ENCODE measurements at regions of chr7 and their contacts with region 1.

Region 1: DNA sequence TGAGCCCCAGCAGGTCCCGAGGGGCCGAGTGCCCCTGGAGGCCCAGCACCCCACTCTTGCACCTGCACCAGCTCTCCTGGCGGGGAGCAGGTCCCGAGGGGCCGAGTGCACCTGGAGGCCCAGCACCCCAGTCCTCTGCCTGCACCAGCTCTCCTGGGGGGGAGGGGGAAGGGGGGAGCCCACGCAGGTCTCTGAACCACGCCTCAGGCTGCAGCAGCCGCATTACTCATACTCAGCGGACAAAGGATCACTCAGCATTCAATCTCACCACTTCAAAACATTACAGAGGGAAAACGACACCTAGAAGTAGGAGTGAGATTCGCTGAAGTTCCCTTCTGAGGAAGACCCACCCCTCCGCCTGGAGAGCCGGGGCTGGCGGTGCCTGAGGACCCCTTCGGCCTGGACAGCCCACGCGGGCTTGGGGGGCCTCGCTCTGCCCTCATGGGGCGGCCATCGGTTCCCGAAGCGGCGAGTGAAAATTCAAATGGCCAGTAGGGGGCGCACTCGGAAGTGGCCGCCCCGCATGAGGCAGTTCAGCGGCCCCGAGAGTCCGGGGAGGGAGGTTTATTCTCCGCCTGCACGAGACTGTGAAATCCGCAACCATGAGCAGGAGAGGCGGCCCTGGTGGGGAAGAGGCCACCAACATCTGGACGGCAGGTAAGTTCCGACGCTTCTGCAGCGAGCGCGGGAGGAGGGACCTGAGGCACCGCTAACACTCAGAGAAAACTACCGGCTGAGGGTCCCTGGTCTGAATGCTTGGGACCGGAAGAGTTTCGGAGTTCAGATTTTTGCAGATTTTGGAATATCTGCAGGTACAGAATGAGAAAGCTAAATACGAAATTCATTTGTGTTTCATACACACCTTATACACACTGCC is 1.1 kb upstream of the GPER1 start:
- DNase-seq: peak; percentile 82
- H3K4me3 Mint-ChIP-seq: peak overlapping the region; percentile 64
- H3K27ac Mint-ChIP-seq: no peak overlapping the region
- H3K4me1 Mint-ChIP-seq: peaks cover 13% of the 10 kb centered on the region
- H3K27me3 Mint-ChIP-seq: peaks cover 5% of the 10 kb centered on the region

Region 2: DNA sequence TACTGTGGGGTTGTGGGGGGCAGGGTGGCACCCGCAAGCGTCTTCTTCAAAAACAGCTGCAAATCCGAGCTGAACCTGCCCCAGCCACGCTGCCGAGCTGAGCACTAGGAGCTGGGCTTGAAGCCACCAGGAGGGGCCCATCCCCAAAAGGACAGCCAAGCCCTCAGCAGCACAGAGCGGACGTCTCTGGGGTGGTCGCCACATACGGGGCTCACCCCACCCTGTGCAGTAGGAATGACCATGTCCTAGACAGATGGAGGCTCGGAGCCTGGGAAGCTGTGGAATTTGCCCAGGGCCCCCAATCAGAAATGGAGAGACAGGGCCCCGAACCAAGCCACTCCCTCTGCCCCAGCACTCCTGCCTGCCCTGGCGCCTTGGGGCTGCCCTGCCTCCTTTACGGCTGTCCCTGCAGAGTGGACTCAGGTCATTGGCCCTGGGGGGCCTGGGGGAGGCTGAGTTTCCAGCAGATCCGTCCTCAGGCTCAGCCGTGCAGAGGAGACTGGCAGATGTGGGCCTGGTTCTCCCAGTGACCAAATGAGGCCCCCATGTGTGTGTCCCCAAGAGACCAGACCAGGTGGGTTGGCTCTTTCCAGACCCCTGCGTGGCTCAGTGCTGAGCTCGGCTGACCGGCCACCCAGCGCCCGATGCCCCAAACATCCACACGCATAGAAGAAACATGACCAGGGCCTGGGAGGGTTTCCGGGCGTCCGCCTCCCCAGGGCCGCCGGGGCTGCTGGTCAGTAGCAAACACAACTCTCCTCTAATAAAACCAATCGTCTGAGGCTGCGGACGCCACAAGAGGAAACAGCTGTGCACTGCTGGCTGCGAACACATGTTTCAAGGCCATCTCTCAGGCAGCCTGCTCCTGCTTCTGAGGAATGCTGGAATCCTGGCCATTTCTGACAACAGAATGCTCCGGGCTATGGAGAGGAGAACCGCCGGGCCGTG is 622.1 kb before region 1 on chr7:
- CTCF ChIA-PET with region 1: no interaction called
- DNase-seq: no peak
- H3K4me3 Mint-ChIP-seq: no peak overlapping the region
- H3K27ac Mint-ChIP-seq: no peak overlapping the region
- H3K4me1 Mint-ChIP-seq: no peaks in the 10 kb centered on the region
- H3K27me3 Mint-ChIP-seq: no peaks in the 10 kb centered on the region

Region 3: GRCh38 chr7:888081-888997 is 198.5 kb before region 1 on chr7:
- CTCF ChIA-PET with region 1: no interaction called
- DNase-seq: no peak
- H3K4me3 Mint-ChIP-seq: no peak overlapping the region
- H3K27ac Mint-ChIP-seq: no peak overlapping the region
- H3K4me1 Mint-ChIP-seq: no peaks in the 10 kb centered on the region
- H3K27me3 Mint-ChIP-seq: no peaks in the 10 kb centered on the region

Region 4: GRCh38 chr7:1033546-1034145 is 53.2 kb before region 1 on chr7:
- CTCF ChIA-PET with region 1: no interaction called
- DNase-seq: peak; percentile 48
- H3K4me3 Mint-ChIP-seq: no peak overlapping the region
- H3K27ac Mint-ChIP-seq: peak overlapping the region; percentile 22
- H3K4me1 Mint-ChIP-seq: peaks cover 48% of the 10 kb centered on the region
- H3K27me3 Mint-ChIP-seq: no peaks in the 10 kb centered on the region

Region 5: GRCh38 chr7:1144269-1144771 is 57.5 kb after region 1 on chr7:
- CTCF ChIA-PET with region 1: interaction called, 12 read pairs
- DNase-seq: no peak
- H3K4me3 Mint-ChIP-seq: no peak overlapping the region
- H3K27ac Mint-ChIP-seq: no peak overlapping the region
- H3K4me1 Mint-ChIP-seq: no peaks in the 10 kb centered on the region
- H3K27me3 Mint-ChIP-seq: peaks cover 10% of the 10 kb centered on the region